A549 (cell line): ENCODE measurements at regions of chr7 and their contacts with region 1.

Region 1: GRCh38 chr7:30901856-30902255 is 9.8 kb upstream of the AQP1 start:
- DNase-seq: no peak
- ATAC-seq: peak in 1 of 2 experiments; percentile 31; a peak in 1 of 6 replicates
- H3K4me3 ChIP-seq: no peak overlapping the region
- H3K27ac ChIP-seq: no peak overlapping the region
- H3K4me1 ChIP-seq: peaks cover 15% of the 10 kb centered on the region; the same call in 2 of the 3 replicates
- CTCF ChIP-seq: no peak
- EP300 ChIP-seq: no peak
- POLR2A ChIP-seq: no peak
- RAD21 ChIP-seq: no peak

Region 2: GRCh38 chr7:30842542-30843451 is 59.1 kb before region 1 on chr7:
- CTCF ChIA-PET with region 1: no interaction called
- POLR2A ChIA-PET with region 1: no interaction called
- DNase-seq: no peak
- ATAC-seq: no peak
- H3K4me3 ChIP-seq: no peak overlapping the region
- H3K27ac ChIP-seq: no peak overlapping the region
- H3K4me1 ChIP-seq: peaks cover 5% of the 10 kb centered on the region; the same call in 1 of the 3 replicates
- CTCF ChIP-seq: no peak
- EP300 ChIP-seq: no peak
- POLR2A ChIP-seq: no peak
- RAD21 ChIP-seq: no peak

Region 3: DNA sequence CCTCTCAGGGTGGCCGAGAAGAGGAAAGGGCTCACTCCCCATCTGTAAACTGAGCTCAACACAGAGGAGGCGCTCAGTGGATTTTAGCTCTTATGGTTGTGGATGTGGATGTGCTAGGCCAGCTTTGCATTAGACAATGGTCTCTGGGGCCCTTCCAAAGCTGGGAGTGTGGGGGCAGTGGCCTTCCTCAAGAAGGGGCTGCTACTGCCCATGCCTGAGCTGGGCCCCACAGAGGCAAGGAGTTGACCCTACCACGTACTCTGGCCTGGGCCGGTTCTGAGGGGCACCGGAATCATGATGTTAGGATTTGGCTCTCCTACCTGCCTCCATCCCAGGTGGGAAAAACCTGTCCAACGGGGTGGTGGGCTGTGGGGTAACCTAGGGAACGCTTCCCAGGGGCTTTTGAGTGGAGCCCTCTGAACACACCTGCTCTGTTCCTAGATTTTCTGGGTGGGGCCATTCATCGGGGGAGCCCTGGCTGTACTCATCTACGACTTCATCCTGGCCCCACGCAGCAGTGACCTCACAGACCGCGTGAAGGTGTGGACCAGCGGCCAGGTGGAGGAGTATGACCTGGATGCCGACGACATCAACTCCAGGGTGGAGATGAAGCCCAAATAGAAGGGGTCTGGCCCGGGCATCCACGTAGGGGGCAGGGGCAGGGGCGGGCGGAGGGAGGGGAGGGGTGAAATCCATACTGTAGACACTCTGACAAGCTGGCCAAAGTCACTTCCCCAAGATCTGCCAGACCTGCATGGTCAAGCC is 21.3 kb after region 1 on chr7:
- CTCF ChIA-PET with region 1: no interaction called
- POLR2A ChIA-PET with region 1: interaction called, 10 read pairs
- DNase-seq: no peak
- ATAC-seq: no peak
- H3K4me3 ChIP-seq: no peak overlapping the region
- H3K27ac ChIP-seq: no peak overlapping the region
- H3K4me1 ChIP-seq: peaks cover 12% of the 10 kb centered on the region; the same call in 2 of the 3 replicates
- CTCF ChIP-seq: no peak
- EP300 ChIP-seq: no peak
- POLR2A ChIP-seq: no peak
- RAD21 ChIP-seq: no peak

Region 4: DNA sequence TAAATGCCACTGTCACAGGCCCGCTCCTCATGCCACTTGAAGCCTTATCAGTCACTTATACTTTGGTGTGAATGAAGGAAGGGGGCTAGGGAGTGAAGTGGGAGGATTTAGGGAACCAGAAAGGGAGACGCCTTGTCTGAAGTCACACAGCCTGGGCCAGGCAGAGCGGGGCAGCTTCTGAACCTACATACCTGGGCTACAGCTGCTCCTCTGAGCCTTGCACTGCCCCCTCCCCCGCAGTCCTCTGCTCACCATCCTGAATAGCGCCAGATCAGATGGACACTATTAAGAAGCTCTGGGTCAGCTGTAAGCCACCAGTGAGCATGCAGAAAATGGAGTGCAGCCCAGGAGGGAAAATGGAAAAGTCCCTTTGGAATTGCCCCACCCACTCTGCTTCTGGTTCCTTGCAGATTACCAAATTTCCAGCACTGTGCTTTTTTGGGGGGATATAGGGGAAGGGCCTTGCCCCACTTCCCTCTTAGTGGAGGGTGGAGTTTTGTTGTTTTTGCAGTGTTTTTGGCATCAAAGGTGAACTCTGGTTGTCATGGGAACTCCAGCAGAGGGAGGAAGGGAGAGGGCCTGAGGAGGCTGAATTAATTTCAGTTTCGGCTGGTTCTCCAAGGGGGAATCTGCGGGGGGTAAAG is 115.3 kb after region 1 on chr7:
- CTCF ChIA-PET with region 1: no interaction called
- POLR2A ChIA-PET with region 1: no interaction called
- DNase-seq: no peak
- ATAC-seq: no peak
- H3K4me3 ChIP-seq: no peak overlapping the region
- H3K27ac ChIP-seq: no peak overlapping the region
- H3K4me1 ChIP-seq: no peaks in the 10 kb centered on the region
- CTCF ChIP-seq: no peak
- EP300 ChIP-seq: no peak
- POLR2A ChIP-seq: no peak
- RAD21 ChIP-seq: no peak